ENCODE measurements at regions of chr5 and their contacts with region 1.

Region 1: GRCh38 chr5:40679155-40679913 is 381 bp upstream of the PTGER4 start:
- DNase-seq: peak; percentile 79
- ATAC-seq: peak; percentile 74
- H3K4me3 Mint-ChIP-seq: peak overlapping the region; percentile 98
- H3K27ac Mint-ChIP-seq: peak overlapping the region; percentile 92
- H3K4me1 Mint-ChIP-seq: peaks cover 48% of the 10 kb centered on the region
- H3K27me3 Mint-ChIP-seq: no peaks in the 10 kb centered on the region
- CTCF ChIP-seq: no peak

Region 2: GRCh38 chr5:40150896-40151295 is 528.4 kb before region 1 on chr5:
- CTCF ChIA-PET with region 1: no interaction called
- POLR2A ChIA-PET with region 1: no interaction called
- intact Hi-C with region 1: loop called (anchors 5 kb)
- DNase-seq: no peak
- ATAC-seq: no peak
- H3K4me3 Mint-ChIP-seq: no peak overlapping the region
- H3K27ac Mint-ChIP-seq: no peak overlapping the region
- H3K4me1 Mint-ChIP-seq: no peaks in the 10 kb centered on the region
- H3K27me3 Mint-ChIP-seq: no peaks in the 10 kb centered on the region
- CTCF ChIP-seq: no peak

Region 3: GRCh38 chr5:40367255-40367654 is 312.1 kb before region 1 on chr5:
- CTCF ChIA-PET with region 1: interaction called, 20 read pairs
- POLR2A ChIA-PET with region 1: interaction called, 3 read pairs
- intact Hi-C with region 1: loop called (anchors 1 kb)
- DNase-seq: no peak
- ATAC-seq: peak; percentile 45
- H3K4me3 Mint-ChIP-seq: no peak overlapping the region
- H3K27ac Mint-ChIP-seq: no peak overlapping the region
- H3K4me1 Mint-ChIP-seq: peaks cover 13% of the 10 kb centered on the region
- H3K27me3 Mint-ChIP-seq: no peaks in the 10 kb centered on the region
- CTCF ChIP-seq: no peak

Region 4: GRCh38 chr5:40437452-40437861 is 241.9 kb before region 1 on chr5:
- CTCF ChIA-PET with region 1: interaction called, 7 read pairs
- POLR2A ChIA-PET with region 1: interaction called, 14 read pairs
- intact Hi-C with region 1: loop called (anchors 1 kb)
- DNase-seq: no peak
- ATAC-seq: peak; percentile 80
- H3K4me3 Mint-ChIP-seq: peak overlapping the region; percentile 56
- H3K27ac Mint-ChIP-seq: peak overlapping the region; percentile 54
- H3K4me1 Mint-ChIP-seq: peaks cover 45% of the 10 kb centered on the region
- H3K27me3 Mint-ChIP-seq: no peaks in the 10 kb centered on the region
- CTCF ChIP-seq: no peak

Region 5: DNA sequence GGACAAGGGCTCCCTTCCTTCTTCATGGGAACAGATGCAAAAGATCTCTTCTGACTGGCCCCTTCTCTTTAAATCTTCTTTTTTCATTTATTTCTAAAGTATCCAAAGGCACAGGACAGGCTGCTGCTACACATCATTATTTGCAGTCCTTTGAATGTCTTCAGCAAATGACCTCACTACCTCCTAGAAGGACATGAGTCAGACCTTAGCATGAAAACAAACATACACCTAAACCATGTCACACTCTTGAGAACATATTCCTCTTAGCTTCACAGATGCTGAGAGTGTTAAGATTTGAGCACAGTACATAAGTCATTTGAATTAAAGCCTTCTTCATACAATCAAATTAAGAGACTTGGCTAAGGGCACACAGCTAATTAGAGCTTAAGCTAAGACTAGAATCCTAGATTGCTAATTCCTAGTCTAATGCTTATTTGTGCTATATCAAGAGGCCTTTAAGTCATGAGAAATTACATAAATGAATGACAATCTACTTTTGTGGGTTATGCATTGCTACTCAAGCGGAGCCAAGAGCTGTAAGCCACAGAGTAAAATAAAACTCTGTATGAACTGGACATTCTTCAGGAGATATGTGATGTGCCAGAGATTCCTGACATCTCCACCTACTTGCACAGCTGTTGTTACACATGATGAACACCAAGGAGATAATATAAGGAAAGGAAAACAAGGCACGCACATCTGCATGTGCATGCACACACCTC is 108.8 kb before region 1 on chr5:
- CTCF ChIA-PET with region 1: no interaction called
- POLR2A ChIA-PET with region 1: interaction called, 5 read pairs
- intact Hi-C with region 1: loop called (anchors 5 kb)
- DNase-seq: no peak
- ATAC-seq: peak; percentile 72
- H3K4me3 Mint-ChIP-seq: peak overlapping the region; percentile 59
- H3K27ac Mint-ChIP-seq: peak overlapping the region; percentile 64
- H3K4me1 Mint-ChIP-seq: peaks cover 39% of the 10 kb centered on the region
- H3K27me3 Mint-ChIP-seq: no peaks in the 10 kb centered on the region
- CTCF ChIP-seq: no peak

Region 6: DNA sequence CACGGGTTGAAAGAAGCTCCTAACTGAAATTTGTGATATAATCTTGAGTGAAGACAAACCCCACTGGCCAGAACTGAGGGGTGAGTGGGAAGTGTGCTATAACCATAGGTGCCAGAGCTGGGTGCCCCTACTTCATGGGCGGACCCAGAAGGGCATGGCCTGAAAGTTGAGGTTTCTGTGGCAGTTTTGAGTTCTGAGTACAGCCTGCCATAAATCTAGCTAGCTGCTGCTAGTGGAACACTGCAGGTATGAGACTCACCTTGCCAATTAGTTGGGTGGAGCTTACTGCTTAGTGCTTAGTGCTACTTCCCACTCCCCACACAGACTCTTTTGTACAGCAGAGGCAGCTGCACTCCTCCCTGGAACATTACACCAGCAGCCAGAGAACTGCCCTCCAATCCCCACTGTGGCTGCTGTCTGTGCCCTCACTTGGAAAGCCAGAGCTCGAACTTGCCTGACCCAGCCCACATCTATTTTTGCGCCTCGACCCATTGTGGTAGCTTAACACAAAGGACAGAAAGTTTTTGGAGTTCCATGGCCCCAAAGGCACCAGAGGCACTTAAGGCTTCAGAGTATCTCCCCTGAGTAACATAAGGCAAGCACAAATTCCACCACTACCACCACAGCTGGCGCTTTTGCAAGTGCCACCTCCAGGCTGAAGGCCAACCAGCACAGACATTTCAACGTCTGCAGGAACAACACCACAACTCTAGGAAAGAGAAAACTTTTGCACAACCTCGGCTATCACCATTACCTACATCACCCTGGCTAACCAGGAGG is 26.7 kb before region 1 on chr5:
- CTCF ChIA-PET with region 1: no interaction called
- POLR2A ChIA-PET with region 1: interaction called, 4 read pairs
- intact Hi-C with region 1: loop called (anchors 1 kb)
- DNase-seq: no peak
- ATAC-seq: peak; percentile 10
- H3K4me3 Mint-ChIP-seq: peak overlapping the region; percentile 39
- H3K27ac Mint-ChIP-seq: no peak overlapping the region
- H3K4me1 Mint-ChIP-seq: peaks cover 36% of the 10 kb centered on the region
- H3K27me3 Mint-ChIP-seq: no peaks in the 10 kb centered on the region
- CTCF ChIP-seq: no peak

Region 7: DNA sequence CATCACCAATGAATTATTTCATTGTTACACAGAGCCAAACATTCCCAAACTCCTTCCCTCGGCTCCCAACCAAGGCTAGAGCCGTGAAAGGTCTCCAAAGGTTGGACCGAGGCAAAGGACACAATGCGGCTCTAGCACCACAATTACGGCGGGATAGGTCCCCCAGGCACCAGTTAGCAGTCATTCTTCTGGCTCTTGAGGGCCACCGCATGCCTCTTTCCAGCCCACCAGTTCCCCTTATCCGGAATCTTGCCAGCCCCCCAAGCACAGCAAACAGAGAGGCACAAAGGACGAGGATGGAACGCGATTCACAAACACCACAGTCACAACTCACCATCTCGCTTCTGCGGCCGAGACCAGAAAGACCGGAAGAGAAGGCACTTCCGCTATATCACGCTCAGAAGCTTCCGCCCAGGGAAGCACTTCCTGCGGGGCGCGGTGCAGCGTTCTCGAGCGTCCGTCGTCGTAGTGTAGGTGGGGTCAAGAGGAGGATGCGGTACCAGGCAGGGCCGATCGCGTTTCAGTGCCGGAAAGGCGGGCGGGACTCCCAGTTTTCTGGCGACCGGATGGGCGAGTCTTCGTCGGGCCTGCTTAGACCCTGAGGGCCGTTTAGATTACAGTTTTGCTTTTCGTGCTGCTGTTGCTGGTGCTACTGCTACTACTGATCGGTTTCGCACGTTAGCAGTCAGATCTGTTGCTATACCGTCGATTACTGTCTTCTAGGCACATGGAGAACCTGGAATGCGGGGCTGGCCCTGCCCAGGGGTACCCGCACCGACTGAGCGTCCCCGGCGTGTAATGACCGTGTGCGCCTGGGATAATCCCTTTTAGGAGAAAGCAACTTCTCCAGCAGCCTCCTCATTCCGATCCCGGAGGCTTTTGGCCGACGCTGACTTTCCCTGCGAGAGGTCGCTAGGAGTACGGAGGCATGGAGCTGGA is 155.8 kb after region 1 on chr5 and contains the start of gene RPL37:
- CTCF ChIA-PET with region 1: no interaction called
- POLR2A ChIA-PET with region 1: interaction called, 4 read pairs
- intact Hi-C with region 1: loop called (anchors 5 kb)
- DNase-seq: peak; percentile 80
- ATAC-seq: peak; percentile 98
- H3K4me3 Mint-ChIP-seq: peak within 1 kb of the TSS; percentile 100
- H3K27ac Mint-ChIP-seq: peak within 1 kb of the TSS; percentile 99
- H3K4me1 Mint-ChIP-seq: peaks cover 49% of the 10 kb centered on the region
- H3K27me3 Mint-ChIP-seq: no peaks in the 10 kb centered on the region
- CTCF ChIP-seq: no peak
- total RNA-seq, gene RPL37: 2,223 and 2,547 TPM in 2 replicates